ENCODE measurements at regions of chr18 and their contacts with region 1.

Region 1: GRCh38 chr18:48777026-48777743 is 173.6 kb downstream of the SMAD7 start:
- DNase-seq: peak; percentile 75 to 85
- ATAC-seq: peak; percentile 55
- H3K4me3 ChIP-seq: no peak overlapping the region
- H3K27ac ChIP-seq: no peak overlapping the region
- H3K4me1 ChIP-seq: no peaks in the 10 kb centered on the region
- H3K27me3 ChIP-seq: no peaks in the 10 kb centered on the region

Region 2: DNA sequence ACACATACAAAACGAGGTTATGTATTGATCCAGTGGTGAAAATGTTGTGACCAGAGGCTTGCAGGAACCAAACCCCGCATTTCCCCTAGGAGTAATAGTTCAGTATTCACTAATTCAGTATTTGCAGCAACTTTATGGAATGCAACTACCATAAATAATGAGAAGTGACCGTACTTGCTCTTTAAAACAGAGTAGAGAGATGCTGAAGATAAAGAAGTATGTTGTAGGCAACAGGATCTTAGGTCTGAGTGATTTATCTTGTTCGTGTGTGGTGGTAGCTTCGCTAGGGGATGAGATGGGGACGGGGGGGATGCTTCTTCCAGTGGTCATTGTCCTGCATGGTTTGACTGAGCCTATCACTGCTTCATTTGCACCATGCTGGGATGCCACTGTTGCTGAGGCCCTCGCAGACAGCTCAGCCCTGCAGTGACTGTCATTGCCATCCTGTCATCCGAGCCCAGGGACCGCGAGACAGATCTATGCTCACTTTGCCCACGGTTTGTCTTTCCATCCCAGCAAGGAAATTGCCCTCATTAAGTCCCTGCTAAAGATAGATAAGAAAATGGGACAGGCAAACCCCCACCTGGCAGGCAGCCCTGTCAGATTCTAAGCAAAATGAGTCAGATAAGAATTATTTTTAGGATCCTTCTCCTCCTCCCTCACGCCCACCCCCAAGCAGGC is 57.1 kb before region 1 on chr18:
- intact Hi-C with region 1: no loop called
- DNase-seq: peak; percentile 62 to 74
- ATAC-seq: no peak
- H3K4me3 ChIP-seq: no peak overlapping the region
- H3K27ac ChIP-seq: no peak overlapping the region
- H3K4me1 ChIP-seq: peaks cover 4% of the 10 kb centered on the region in 2 donors
- H3K27me3 ChIP-seq: no peaks in the 10 kb centered on the region

Region 3: GRCh38 chr18:48872234-48873145 is 95.3 kb after region 1 on chr18:
- intact Hi-C with region 1: loop called in 1 of 2 experiments (anchors 2 kb)
- DNase-seq: no peak
- ATAC-seq: no peak
- H3K4me3 ChIP-seq: no peak overlapping the region
- H3K27ac ChIP-seq: peak overlapping the region; percentile 73 to 81
- H3K4me1 ChIP-seq: peaks cover 0 to 5% of the 10 kb centered on the region in 2 donors
- H3K27me3 ChIP-seq: no peaks in the 10 kb centered on the region

Region 4: GRCh38 chr18:48940854-48941611 is 163.8 kb after region 1 on chr18:
- intact Hi-C with region 1: loop called (anchors 2 to 5 kb)
- DNase-seq: no peak
- ATAC-seq: no peak
- H3K4me3 ChIP-seq: no peak overlapping the region
- H3K27ac ChIP-seq: peak overlapping the region; percentile 61 to 83
- H3K4me1 ChIP-seq: peaks cover 2 to 6% of the 10 kb centered on the region in 2 donors
- H3K27me3 ChIP-seq: no peaks in the 10 kb centered on the region

Region 5: DNA sequence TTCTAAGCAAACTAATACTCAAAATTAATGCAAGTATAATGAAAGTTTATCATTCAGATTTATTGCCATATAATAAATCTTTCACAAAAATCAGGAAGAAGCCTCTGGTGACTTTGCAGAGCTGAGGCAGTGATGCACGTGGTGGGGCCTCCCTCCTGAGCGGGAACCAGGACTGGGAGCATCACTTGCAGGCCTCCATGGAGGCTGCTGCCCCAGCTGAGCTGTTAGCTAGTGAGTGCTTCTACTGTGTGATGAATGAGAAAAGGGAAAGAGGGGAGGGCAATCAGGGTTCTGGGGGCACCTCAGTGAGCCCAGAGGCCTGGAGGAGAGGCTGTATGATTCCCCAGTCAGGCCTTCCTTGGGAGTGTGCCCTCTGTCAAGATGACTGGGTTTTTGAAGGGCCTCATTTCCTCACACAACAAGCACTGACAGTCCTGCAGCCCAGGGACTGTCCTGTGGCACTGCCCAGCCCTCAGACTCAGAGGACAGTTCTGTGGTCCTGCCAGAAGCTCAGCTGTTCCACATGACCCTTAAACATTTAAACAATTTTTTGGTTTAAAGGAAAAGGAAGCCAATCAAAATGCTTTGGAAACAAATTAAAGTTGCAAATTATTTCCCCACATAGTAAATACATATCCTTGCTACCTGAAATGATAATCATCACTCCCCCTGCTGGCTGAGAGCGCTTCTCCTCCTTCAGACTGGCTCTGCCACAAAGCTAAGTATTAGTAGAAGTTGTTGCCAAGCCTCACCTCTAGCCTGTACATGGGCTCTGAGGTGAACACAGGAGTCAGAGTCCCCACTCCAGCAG is 264.5 kb after region 1 on chr18:
- intact Hi-C with region 1: loop called in 1 of 2 experiments (anchors 10 kb)
- DNase-seq: no peak
- ATAC-seq: peak; percentile 58
- H3K4me3 ChIP-seq: no peak overlapping the region
- H3K27ac ChIP-seq: no peak overlapping the region
- H3K4me1 ChIP-seq: no peaks in the 10 kb centered on the region
- H3K27me3 ChIP-seq: no peaks in the 10 kb centered on the region

Region 6: GRCh38 chr18:49178736-49179135 is 401.6 kb after region 1 on chr18:
- intact Hi-C with region 1: loop called in 1 of 2 experiments (anchors 5 kb)
- DNase-seq: no peak
- ATAC-seq: no peak
- H3K4me3 ChIP-seq: no peak overlapping the region
- H3K27ac ChIP-seq: no peak overlapping the region
- H3K4me1 ChIP-seq: no peaks in the 10 kb centered on the region
- H3K27me3 ChIP-seq: no peaks in the 10 kb centered on the region